ENCODE measurements at regions of chr10 and their contacts with region 1.

Region 1: DNA sequence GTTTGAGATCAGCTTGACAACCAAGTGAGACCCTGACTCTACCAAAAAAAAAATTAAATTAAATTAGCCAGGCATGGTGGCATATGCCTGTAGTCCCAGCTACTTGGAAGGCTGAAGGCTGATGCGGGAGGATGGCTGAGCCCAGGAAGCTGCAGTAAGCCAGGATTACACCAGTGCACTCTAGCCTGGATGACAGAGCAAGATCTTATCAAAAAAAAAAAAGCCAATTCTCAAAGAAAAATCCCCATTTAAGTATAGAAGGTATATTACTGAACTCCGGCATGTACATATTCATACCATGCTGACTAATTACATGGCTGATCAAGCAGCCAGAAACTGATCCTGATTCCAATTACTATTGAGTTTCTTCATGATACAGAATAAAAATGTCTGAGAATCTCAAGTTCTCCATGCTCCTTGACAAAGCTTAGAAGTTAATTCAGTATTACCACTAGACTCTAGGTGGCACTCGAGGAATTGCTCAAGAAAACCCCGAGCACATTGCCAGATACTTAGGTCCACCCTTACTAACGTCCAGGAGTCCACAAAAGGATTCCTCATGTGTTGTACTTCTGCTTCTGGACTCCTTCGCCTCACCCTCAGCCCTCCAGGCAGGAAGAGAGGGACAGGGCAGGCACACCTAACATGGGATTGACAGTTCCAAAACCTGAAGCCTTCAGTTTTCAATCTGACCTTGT is 148.9 kb downstream of the PARD3 start:
- DNase-seq: peak; percentile 73 to 93
- ATAC-seq: peak; percentile 97 to 99
- H3K4me3 ChIP-seq: no peak overlapping the region
- H3K27ac ChIP-seq: peak overlapping the region; percentile 33 to 78; a peak in 4 of 6 replicates
- H3K4me1 ChIP-seq: peaks cover 23% of the 10 kb centered on the region
- CTCF ChIP-seq: peak; percentile 89
- EP300 ChIP-seq: no peak
- POLR2A ChIP-seq: no peak
- RAD21 ChIP-seq: peak; percentile 92 to 95

Region 2: DNA sequence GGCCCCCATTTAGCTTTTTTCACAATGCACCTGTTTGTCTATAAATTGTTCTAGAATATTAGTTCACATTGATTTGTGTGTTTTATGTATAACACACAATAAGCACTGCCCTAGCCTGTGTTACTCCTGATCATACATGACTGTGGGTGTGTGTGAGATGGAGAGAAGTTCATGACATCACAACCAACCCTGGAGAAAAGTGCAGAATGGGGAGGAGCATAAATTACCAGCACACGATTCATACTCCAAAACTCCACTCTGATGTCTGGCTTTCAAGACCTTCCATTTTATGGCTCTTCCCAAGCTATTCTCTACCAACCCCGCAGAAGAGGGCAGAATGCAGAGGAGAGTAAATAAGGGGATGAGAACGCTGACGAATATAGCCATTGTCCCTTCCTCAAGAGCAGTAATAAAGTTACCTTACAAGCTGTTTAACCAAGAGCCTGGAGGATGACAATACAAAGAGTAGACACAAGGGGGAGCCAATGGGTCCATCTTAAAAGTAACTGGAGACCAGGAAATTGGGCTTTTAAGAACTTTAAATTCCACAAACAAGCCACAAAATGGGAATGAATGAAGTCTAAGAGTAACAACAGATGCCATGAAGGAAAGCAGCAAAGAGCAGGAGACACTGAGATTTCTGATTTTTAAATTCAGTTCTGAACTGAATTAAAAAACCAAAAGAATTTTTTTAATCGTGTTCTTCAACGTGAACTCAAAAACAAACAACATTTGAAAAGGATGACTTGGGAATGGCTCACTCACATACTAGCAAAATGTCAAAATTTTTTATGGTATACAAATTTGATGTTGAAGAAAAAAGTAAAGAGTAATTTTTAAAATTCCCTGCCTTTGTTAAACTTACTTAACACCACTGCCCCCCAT is 10.6 kb before region 1 on chr10:
- CTCF ChIA-PET with region 1: interaction called, 32 read pairs
- POLR2A ChIA-PET with region 1: no interaction called
- DNase-seq: peak; percentile 30 to 78
- ATAC-seq: peak; percentile 70 to 77; a peak in 5 of 6 replicates
- H3K4me3 ChIP-seq: no peak overlapping the region
- H3K27ac ChIP-seq: no peak overlapping the region
- H3K4me1 ChIP-seq: peaks cover 19% of the 10 kb centered on the region
- CTCF ChIP-seq: peak; percentile 79
- EP300 ChIP-seq: no peak
- POLR2A ChIP-seq: no peak
- RAD21 ChIP-seq: peak; percentile 65 to 67

Region 3: GRCh38 chr10:34723750-34724149 is 57.6 kb after region 1 on chr10:
- CTCF ChIA-PET with region 1: interaction called, 13 read pairs
- POLR2A ChIA-PET with region 1: no interaction called
- DNase-seq: peak in 1 of 2 experiments; percentile 54
- ATAC-seq: peak; percentile 67 to 71
- H3K4me3 ChIP-seq: no peak overlapping the region
- H3K27ac ChIP-seq: 0 out of 6 replicates have a peak overlapping the region, but pooled peaks of 1 of the 2 experiments have one; percentile 16
- H3K4me1 ChIP-seq: peaks cover 59% of the 10 kb centered on the region
- CTCF ChIP-seq: peak; percentile 60
- EP300 ChIP-seq: no peak
- POLR2A ChIP-seq: no peak
- RAD21 ChIP-seq: peak; percentile 76 to 79

Region 4: DNA sequence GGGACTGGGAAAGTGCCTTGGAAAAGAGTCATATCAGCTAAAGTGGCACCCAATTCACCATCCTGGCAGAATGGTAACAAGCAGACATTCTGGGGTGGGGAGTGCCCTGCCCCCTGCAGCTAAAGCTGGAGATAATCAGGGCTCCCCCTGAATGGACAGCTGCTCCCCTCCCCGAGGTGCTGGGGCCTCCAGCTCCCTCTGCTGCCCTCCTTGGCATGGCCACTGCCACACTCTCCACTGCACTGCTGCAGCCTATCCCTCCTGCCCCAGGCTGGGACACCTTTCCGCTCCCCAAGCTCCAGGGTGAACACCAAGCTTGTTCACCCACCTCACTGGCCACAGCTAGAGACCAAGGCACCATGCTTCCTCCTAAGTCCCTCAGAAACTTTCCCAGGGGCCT is 158.7 kb after region 1 on chr10:
- CTCF ChIA-PET with region 1: interaction called, 15 read pairs
- POLR2A ChIA-PET with region 1: no interaction called
- DNase-seq: peak in 1 of 2 experiments; percentile 31
- ATAC-seq: peak; percentile 94 to 95
- H3K4me3 ChIP-seq: no peak overlapping the region
- H3K27ac ChIP-seq: no peak overlapping the region
- H3K4me1 ChIP-seq: no peaks in the 10 kb centered on the region; the same call in 2 of the 3 replicates
- CTCF ChIP-seq: peak; percentile 31; the same call in 2 of the 3 replicates
- EP300 ChIP-seq: no peak
- POLR2A ChIP-seq: no peak
- RAD21 ChIP-seq: peak; percentile 38 to 44; a peak in 3 of 5 replicates

Region 5: GRCh38 chr10:35027567-35027966 is 361.4 kb after region 1 on chr10:
- CTCF ChIA-PET with region 1: interaction called, 28 read pairs
- POLR2A ChIA-PET with region 1: no interaction called
- DNase-seq: no peak
- ATAC-seq: no peak
- H3K4me3 ChIP-seq: no peak overlapping the region
- H3K27ac ChIP-seq: no peak overlapping the region
- H3K4me1 ChIP-seq: peaks cover 3% of the 10 kb centered on the region; the same call in 1 of the 3 replicates
- CTCF ChIP-seq: peak; percentile 53
- EP300 ChIP-seq: no peak
- POLR2A ChIP-seq: no peak
- RAD21 ChIP-seq: peak; percentile 54 to 61; a peak in 4 of 5 replicates

Measured in A549 (cell line).